Mammary epithelial cell (primary cell): ENCODE measurements at regions of chr5 and their contacts with region 1.

Region 1: DNA sequence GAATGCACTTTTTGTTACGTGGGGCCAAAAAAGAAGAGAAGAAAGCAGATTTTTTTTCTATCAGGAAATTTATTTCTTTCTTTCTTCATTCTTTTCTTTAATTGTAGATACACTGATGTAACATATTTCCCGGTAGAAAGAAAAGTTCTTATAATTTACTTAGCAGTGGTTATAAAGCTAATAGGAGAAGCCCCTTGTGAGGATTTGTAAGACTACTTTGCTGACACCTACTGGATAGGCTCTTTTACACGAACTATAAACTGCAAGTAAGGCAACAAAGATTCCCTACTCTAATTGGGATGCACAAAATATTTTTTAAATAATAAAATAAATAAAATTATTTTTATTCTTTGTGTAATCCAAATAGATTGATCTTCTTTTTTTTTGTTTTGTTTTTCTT is 284.4 kb downstream of the DNAH5 start:
- DNase-seq: no peak
- H3K4me3 ChIP-seq: no peak overlapping the region
- H3K27ac ChIP-seq: no peak overlapping the region
- H3K4me1 ChIP-seq: peaks cover 56% of the 10 kb centered on the region
- H3K27me3 ChIP-seq: no peaks in the 10 kb centered on the region
- CTCF ChIP-seq: peak; percentile 28 to 49

Region 2: DNA sequence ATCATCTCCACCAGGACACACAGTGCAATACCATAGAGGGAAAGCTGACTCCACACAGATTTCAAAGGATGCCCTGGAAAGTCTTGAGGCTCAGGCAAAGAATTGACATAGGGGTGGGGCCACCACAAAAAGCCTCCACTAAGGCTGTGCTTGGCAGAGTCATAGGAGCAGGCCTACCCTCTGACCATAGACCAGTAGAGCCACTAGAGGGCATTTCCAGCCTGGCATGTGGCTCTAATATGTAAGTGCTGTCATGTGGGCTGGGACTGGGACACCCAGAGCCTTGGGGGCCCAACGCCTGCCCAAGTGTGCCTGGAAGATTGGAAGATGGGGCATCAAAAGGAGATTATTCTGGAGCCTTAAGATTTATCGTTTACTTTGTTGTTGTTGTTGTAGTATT is 441.6 kb before region 1 on chr5:
- CTCF ChIA-PET with region 1: no interaction called
- dilution Hi-C with region 1: no loop called
- in situ Hi-C with region 1: no loop called
- intact Hi-C with region 1: loop called (anchors 1 kb)
- DNase-seq: peak; percentile 29
- H3K4me3 ChIP-seq: no peak overlapping the region
- H3K27ac ChIP-seq: no peak overlapping the region
- H3K4me1 ChIP-seq: no peaks in the 10 kb centered on the region
- H3K27me3 ChIP-seq: no peaks in the 10 kb centered on the region
- CTCF ChIP-seq: peak; percentile 35 to 64

Region 3: DNA sequence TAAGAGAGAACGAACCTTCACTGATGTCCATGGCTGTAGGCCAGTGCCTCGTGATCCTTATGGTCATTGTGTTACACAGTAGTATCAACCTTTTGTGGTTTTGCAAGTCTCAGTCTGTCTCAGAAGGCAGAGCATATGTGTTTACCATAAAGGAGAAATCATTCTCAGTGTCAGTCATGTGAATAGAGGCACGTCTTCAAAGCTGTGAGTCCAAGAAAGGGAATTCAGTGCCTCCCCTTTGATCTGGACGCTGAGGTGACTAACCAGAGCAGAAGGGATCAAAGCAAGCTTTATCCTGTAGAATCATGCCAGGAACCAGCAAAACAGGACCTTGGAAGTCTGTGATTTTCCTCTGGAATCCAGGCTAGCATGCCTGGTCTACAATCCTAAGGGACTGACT is 149.5 kb before region 1 on chr5:
- CTCF ChIA-PET with region 1: no interaction called
- dilution Hi-C with region 1: no loop called
- in situ Hi-C with region 1: no loop called
- intact Hi-C with region 1: loop called (anchors 10 kb)
- DNase-seq: peak; percentile 96
- H3K4me3 ChIP-seq: no peak overlapping the region
- H3K27ac ChIP-seq: peak overlapping the region; percentile 81
- H3K4me1 ChIP-seq: peaks cover 37% of the 10 kb centered on the region
- H3K27me3 ChIP-seq: no peaks in the 10 kb centered on the region
- CTCF ChIP-seq: no peak

Region 4: DNA sequence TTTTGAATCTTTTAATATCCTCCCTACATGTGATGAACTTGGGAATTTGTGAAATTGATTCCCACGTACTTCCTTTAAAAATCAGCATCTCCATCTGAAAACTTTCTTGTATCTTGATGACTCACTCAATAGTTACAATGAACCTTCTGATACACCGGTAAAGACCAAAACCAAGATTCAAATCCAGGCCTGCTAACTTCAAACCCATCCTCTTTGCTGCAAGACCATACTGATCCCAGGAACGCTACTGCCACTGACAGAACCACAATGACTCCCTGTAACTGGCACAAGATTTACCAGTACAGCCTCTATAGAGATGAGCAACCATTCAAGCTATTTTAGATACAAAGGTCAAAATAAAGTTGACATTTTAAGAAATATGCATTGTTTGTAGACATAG is 48.5 kb before region 1 on chr5:
- CTCF ChIA-PET with region 1: no interaction called
- dilution Hi-C with region 1: no loop called
- in situ Hi-C with region 1: no loop called
- intact Hi-C with region 1: loop called (anchors 2 kb)
- DNase-seq: peak; percentile 97
- H3K4me3 ChIP-seq: no peak overlapping the region
- H3K27ac ChIP-seq: peak overlapping the region; percentile 94
- H3K4me1 ChIP-seq: peaks cover 22% of the 10 kb centered on the region
- H3K27me3 ChIP-seq: no peaks in the 10 kb centered on the region
- CTCF ChIP-seq: no peak

Region 5: GRCh38 chr5:13831351-13831750 is 171.3 kb after region 1 on chr5:
- CTCF ChIA-PET with region 1: no interaction called
- dilution Hi-C with region 1: no loop called
- in situ Hi-C with region 1: no loop called
- intact Hi-C with region 1: loop called (anchors 1 kb)
- DNase-seq: peak; percentile 74
- H3K4me3 ChIP-seq: no peak overlapping the region
- H3K27ac ChIP-seq: peak overlapping the region; percentile 64
- H3K4me1 ChIP-seq: peaks cover 23% of the 10 kb centered on the region
- H3K27me3 ChIP-seq: no peaks in the 10 kb centered on the region
- CTCF ChIP-seq: peak; percentile 20 to 49